A549 (cell line): ENCODE measurements at regions of chr10 and their contacts with region 1.

Region 1: GRCh38 chr10:74008212-74008731 is 10.4 kb downstream of the VCL start:
- DNase-seq: no peak
- ATAC-seq: peak in 1 of 2 experiments; percentile 7; a peak in 1 of 6 replicates
- H3K4me3 ChIP-seq: no peak overlapping the region
- H3K27ac ChIP-seq: peak overlapping the region in 1 of 2 experiments; percentile 69; a peak in 4 of 6 replicates
- H3K4me1 ChIP-seq: peaks cover 79% of the 10 kb centered on the region
- CTCF ChIP-seq: no peak
- EP300 ChIP-seq: no peak
- POLR2A ChIP-seq: no peak
- RAD21 ChIP-seq: no peak

Region 2: GRCh38 chr10:73997787-73998622 is 10.3 kb before region 1 on chr10 and contains the start of gene VCL:
- CTCF ChIA-PET with region 1: interaction called, 17 read pairs
- POLR2A ChIA-PET with region 1: interaction called, 4 read pairs
- DNase-seq: peak; percentile 86 to 98
- ATAC-seq: peak; percentile 94 to 95
- H3K4me3 ChIP-seq: peak within 1 kb of the TSS; percentile 97
- H3K27ac ChIP-seq: peak within 1 kb of the TSS; percentile 95
- H3K4me1 ChIP-seq: peaks cover 36% of the 10 kb centered on the region
- CTCF ChIP-seq: no peak
- EP300 ChIP-seq: no peak
- POLR2A ChIP-seq: peak; percentile 99
- RAD21 ChIP-seq: 0 out of 5 replicates have a peak, but pooled peaks of 1 of the 2 experiments have one; percentile 16
- polyA plus RNA-seq, gene VCL: 101 and 112 TPM in 2 replicates